CD4-positive, alpha-beta memory T cell (primary cell): ENCODE measurements at regions of chr5 and their contacts with region 1.

Region 1: GRCh38 chr5:148730943-148731861 is 76.9 kb upstream of the HTR4 start:
- DNase-seq: peak; percentile 68 to 76 (median 72)
- H3K4me3 ChIP-seq: peak overlapping the region in 1 of 2 donors; percentile 36
- H3K4me3 Mint-ChIP-seq: peak overlapping the region; percentile 77 to 88 (median 84)
- H3K27ac ChIP-seq: no peak overlapping the region
- H3K27ac Mint-ChIP-seq: peak overlapping the region in 5 of 7 donors; percentile 55 to 83 (median 61)
- H3K4me1 ChIP-seq: peaks cover 10% of the 10 kb centered on the region
- H3K4me1 Mint-ChIP-seq: peaks cover 3 to 16% (median 11%) of the 10 kb centered on the region in 4 donors
- H3K27me3 ChIP-seq: no peaks in the 10 kb centered on the region
- H3K27me3 Mint-ChIP-seq: peaks cover 1 to 3% of the 10 kb centered on the region in 2 donors

Region 2: GRCh38 chr5:147857302-147858129 is 873.7 kb before region 1 on chr5:
- CTCF ChIA-PET with region 1: interaction called, 3 read pairs
- POLR2A ChIA-PET with region 1: no interaction called
- intact Hi-C with region 1: loop called (anchors 5 kb)
- DNase-seq: peak in 4 of 5 donors; percentile 2 to 31 (median 24)
- H3K4me3 ChIP-seq: no peak overlapping the region
- H3K4me3 Mint-ChIP-seq: no peak overlapping the region
- H3K27ac ChIP-seq: no peak overlapping the region
- H3K27ac Mint-ChIP-seq: no peak overlapping the region
- H3K4me1 ChIP-seq: no peaks in the 10 kb centered on the region
- H3K4me1 Mint-ChIP-seq: peaks cover 0 to 2% (median 0%) of the 10 kb centered on the region in 4 donors
- H3K27me3 ChIP-seq: no peaks in the 10 kb centered on the region
- H3K27me3 Mint-ChIP-seq: peaks cover 2 to 3% of the 10 kb centered on the region in 2 donors

Region 3: DNA sequence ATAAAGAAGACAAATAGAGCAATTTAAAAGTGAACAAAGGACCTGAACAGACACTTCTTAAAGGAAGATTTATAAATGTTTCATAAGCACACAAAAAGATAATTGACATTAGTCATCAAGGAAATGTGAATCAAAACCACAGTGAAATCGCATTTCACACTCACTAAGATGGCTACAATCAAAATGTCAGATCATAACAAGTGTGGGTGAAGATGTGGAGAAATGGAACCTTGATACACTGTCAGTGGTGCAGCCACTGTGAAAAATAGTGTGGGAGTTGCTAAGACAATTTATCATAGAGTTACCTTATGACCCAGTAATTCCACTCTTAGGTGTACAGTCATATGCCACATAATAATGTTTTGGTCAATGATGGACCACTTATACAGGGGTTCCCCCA is 22.3 kb before region 1 on chr5:
- CTCF ChIA-PET with region 1: interaction called, 17 read pairs
- POLR2A ChIA-PET with region 1: no interaction called
- intact Hi-C with region 1: no loop called
- DNase-seq: no peak
- H3K4me3 ChIP-seq: no peak overlapping the region
- H3K4me3 Mint-ChIP-seq: no peak overlapping the region
- H3K27ac ChIP-seq: no peak overlapping the region
- H3K27ac Mint-ChIP-seq: no peak overlapping the region
- H3K4me1 ChIP-seq: no peaks in the 10 kb centered on the region
- H3K4me1 Mint-ChIP-seq: no peaks in the 10 kb centered on the region
- H3K27me3 ChIP-seq: no peaks in the 10 kb centered on the region
- H3K27me3 Mint-ChIP-seq: peaks cover 4 to 13% of the 10 kb centered on the region in 2 donors

Region 4: GRCh38 chr5:148760945-148761638 is 29.9 kb after region 1 on chr5:
- CTCF ChIA-PET with region 1: interaction called, 10 read pairs
- POLR2A ChIA-PET with region 1: no interaction called
- intact Hi-C with region 1: no loop called
- DNase-seq: no peak
- H3K4me3 ChIP-seq: no peak overlapping the region
- H3K4me3 Mint-ChIP-seq: no peak overlapping the region
- H3K27ac ChIP-seq: no peak overlapping the region
- H3K27ac Mint-ChIP-seq: no peak overlapping the region
- H3K4me1 ChIP-seq: no peaks in the 10 kb centered on the region
- H3K4me1 Mint-ChIP-seq: no peaks in the 10 kb centered on the region
- H3K27me3 ChIP-seq: no peaks in the 10 kb centered on the region
- H3K27me3 Mint-ChIP-seq: peaks cover 4 to 7% of the 10 kb centered on the region in 2 donors

Region 5: GRCh38 chr5:148924817-148925216 is 193.6 kb after region 1 on chr5:
- CTCF ChIA-PET with region 1: no interaction called
- POLR2A ChIA-PET with region 1: no interaction called
- intact Hi-C with region 1: no loop called
- DNase-seq: no peak
- H3K4me3 ChIP-seq: no peak overlapping the region
- H3K4me3 Mint-ChIP-seq: no peak overlapping the region
- H3K27ac ChIP-seq: no peak overlapping the region
- H3K27ac Mint-ChIP-seq: peak overlapping the region in 1 of 7 donors; percentile 17
- H3K4me1 ChIP-seq: no peaks in the 10 kb centered on the region
- H3K4me1 Mint-ChIP-seq: no peaks in the 10 kb centered on the region
- H3K27me3 ChIP-seq: no peaks in the 10 kb centered on the region
- H3K27me3 Mint-ChIP-seq: peaks cover 7 to 10% of the 10 kb centered on the region in 2 donors

Region 6: DNA sequence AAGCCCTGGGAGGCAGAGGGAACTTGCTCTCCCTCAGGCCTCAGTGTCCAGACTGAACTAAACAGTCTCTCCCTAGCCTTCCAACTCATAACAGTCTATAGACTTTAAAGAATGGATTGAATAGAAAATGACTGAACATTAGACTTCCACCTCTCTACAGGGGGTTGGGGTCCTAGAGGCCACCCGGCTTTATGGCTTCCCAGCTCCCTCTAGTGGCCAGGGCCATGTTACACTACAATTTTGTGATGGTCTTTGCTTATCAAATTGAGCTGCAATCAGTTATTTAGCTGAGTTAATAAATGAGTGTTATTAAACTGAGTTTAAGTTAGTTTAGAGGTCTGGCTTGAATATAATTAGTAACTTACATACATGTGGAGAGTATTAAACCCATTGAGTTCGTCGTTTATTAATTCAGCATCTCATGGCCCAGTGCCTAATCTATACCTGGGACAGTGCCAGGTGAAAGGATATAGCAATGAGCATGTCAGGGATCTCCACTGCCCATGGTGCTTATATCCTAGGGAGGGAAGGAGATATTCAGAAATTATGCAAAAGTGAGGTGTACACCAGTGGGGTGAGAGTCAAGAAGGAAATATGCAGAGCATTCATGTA is 226.5 kb after region 1 on chr5:
- CTCF ChIA-PET with region 1: interaction called, 228 read pairs
- POLR2A ChIA-PET with region 1: no interaction called
- intact Hi-C with region 1: loop called (anchors 1 kb)
- DNase-seq: peak; percentile 31 to 45 (median 40)
- H3K4me3 ChIP-seq: no peak overlapping the region
- H3K4me3 Mint-ChIP-seq: no peak overlapping the region
- H3K27ac ChIP-seq: no peak overlapping the region
- H3K27ac Mint-ChIP-seq: no peak overlapping the region
- H3K4me1 ChIP-seq: no peaks in the 10 kb centered on the region
- H3K4me1 Mint-ChIP-seq: peaks cover 0 to 3% (median under 1%) of the 10 kb centered on the region in 4 donors
- H3K27me3 ChIP-seq: no peaks in the 10 kb centered on the region
- H3K27me3 Mint-ChIP-seq: peaks cover 0 to 3% of the 10 kb centered on the region in 2 donors

Region 7: DNA sequence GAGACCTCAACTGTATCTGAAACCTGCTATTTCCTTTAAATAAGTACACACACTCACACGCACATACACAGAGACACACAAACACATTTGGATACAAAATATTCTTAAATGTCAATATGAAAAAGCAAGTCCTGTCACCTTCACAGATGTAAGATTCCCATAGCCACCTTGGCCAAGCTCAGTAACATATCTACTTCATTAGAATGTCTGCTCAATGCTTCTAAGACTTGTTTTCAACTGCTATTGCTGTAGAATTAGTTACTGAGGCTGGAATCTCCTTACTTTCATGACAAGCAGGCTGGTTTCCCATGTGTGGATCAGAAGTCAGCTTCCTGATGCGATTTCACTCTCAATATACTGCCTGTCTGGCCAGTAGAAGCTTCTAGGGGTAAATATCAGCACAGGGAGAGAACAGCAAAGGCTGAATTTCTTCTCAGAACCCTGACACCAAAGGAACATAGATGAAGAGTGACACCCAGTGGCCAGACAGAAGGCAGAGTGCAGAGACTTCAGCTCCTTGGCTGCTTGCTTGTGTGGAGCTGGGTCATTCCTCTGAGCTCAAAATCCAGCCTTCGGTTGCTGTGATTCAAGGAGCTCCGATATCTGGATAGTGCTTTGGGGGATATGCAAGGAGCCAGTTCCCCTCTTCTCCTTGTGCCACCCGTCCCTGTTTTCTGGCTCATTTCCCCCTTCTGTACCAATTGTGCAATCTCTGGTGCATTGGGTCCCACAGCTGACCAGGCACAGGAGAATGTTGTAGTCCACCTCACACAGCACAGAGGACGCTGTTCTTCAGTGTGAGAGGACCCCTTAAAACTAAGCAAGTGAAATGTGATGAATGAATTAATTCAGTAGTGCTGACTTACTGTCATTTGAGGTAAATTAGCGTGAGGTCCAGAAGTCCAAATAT is 383.5 kb after region 1 on chr5:
- CTCF ChIA-PET with region 1: interaction called, 50 read pairs
- POLR2A ChIA-PET with region 1: no interaction called
- intact Hi-C with region 1: loop called (anchors 1 kb)
- DNase-seq: peak; percentile 35 to 56 (median 43)
- H3K4me3 ChIP-seq: no peak overlapping the region
- H3K4me3 Mint-ChIP-seq: no peak overlapping the region
- H3K27ac ChIP-seq: no peak overlapping the region
- H3K27ac Mint-ChIP-seq: no peak overlapping the region
- H3K4me1 ChIP-seq: no peaks in the 10 kb centered on the region
- H3K4me1 Mint-ChIP-seq: no peaks in the 10 kb centered on the region
- H3K27me3 ChIP-seq: no peaks in the 10 kb centered on the region
- H3K27me3 Mint-ChIP-seq: peaks cover 13 to 14% of the 10 kb centered on the region in 2 donors

Region 8: DNA sequence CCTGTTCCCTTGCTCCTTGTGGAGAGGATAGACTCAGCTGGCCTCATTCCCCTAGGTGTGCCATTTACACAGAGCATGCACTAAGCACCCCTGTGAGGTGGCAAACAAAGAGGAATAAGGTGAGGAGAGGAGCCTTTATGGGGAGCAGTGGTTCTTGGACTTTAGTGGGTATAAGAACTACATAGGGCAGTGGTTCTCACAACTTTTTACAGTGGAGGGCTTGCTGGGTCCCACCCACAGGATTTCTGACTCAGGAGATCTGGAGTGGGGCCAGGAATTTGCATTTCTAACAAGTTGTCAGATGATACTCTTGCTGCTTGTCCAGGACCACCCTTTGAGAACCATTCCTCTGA is 1313.1 kb after region 1 on chr5:
- CTCF ChIA-PET with region 1: no interaction called
- POLR2A ChIA-PET with region 1: no interaction called
- intact Hi-C with region 1: no loop called
- DNase-seq: no peak
- H3K4me3 ChIP-seq: no peak overlapping the region
- H3K4me3 Mint-ChIP-seq: no peak overlapping the region
- H3K27ac ChIP-seq: no peak overlapping the region
- H3K27ac Mint-ChIP-seq: peak overlapping the region in 3 of 7 donors; percentile 17 to 50 (median 42)
- H3K4me1 ChIP-seq: peaks cover 11% of the 10 kb centered on the region
- H3K4me1 Mint-ChIP-seq: peaks cover 4 to 25% (median 7%) of the 10 kb centered on the region in 4 donors
- H3K27me3 ChIP-seq: no peaks in the 10 kb centered on the region
- H3K27me3 Mint-ChIP-seq: no peaks in the 10 kb centered on the region